ENCODE measurements at regions of chr19 and their contacts with region 1.

Region 1: DNA sequence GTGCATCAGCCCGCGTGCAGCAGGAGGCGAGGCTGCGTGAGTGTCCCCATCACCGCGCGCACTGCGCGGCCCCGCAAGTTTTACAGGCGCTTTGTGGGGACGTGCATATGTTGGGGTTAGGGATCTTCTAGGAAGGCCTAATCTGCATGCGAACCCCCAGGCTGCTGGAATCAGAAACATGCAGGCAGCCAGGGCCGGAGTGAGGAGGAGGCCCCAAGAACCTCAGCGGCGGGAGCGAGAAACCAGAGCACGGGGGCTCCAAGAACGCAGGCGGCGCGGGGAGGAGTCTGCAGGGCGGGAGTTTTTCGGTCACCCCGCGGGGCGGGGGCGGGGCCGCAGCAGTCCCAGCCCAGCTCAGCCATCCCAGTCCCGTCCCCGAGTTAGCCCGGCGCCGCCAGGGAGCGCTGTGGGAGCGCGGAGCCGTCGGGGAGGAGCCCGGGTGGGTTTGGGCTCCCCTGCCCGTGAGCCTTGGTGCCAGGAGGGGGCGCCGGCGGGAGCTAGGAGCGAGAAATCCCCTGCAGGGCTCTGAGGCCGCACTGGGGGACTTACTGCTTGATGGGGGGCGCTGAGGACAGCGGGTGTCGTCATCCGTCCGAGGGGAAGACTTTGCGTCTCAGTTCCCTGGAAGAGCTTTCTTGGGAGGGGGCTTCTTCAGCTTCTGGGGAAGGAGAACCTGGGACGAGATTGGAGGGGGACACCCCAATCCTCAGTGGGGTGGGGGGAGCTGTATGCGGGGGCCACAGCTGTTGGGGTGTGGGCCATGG is 933 bp upstream of the NRTN start:
- DNase-seq: peak; percentile 98
- ATAC-seq: peak; percentile 91
- H3K4me3 ChIP-seq: peak overlapping the region; percentile 58
- H3K27ac ChIP-seq: no peak overlapping the region
- H3K4me1 ChIP-seq: peaks cover 12% of the 10 kb centered on the region
- H3K27me3 ChIP-seq: no peaks in the 10 kb centered on the region
- CTCF ChIP-seq: peak; percentile 100

Region 2: DNA sequence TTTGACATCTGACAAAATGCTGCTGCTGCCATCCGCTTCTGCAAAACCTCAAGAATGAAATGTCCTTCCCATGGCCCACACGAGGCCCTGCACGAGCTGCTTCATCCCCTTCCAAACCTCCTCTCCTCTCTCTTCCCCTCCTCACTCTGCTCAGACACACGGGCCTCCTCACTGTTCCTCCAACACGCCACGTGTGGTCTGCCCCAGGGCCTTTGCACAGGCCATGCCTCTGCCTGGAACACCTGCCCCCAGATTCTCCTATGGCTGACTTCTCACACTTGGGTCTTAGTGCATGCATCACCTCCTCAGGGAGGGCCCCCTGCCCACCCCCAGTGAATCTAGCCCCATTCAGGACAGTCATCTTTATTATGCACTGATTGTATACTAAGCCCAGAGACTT is 16.9 kb after region 1 on chr19:
- CTCF ChIA-PET with region 1: interaction called, 17 read pairs
- POLR2A ChIA-PET with region 1: interaction called, 3 read pairs
- intact Hi-C with region 1: no loop called
- DNase-seq: no peak
- ATAC-seq: no peak
- H3K4me3 ChIP-seq: no peak overlapping the region
- H3K27ac ChIP-seq: no peak overlapping the region
- H3K4me1 ChIP-seq: no peaks in the 10 kb centered on the region
- H3K27me3 ChIP-seq: no peaks in the 10 kb centered on the region
- CTCF ChIP-seq: no peak

Region 3: GRCh38 chr19:5827891-5828660 is 24.1 kb after region 1 on chr19:
- CTCF ChIA-PET with region 1: interaction called, 16 read pairs
- POLR2A ChIA-PET with region 1: interaction called, 3 read pairs
- intact Hi-C with region 1: no loop called
- DNase-seq: peak; percentile 88
- ATAC-seq: peak; percentile 64
- H3K4me3 ChIP-seq: peak overlapping the region; percentile 59
- H3K27ac ChIP-seq: peak overlapping the region; percentile 35; the same call in 1 of the 2 replicates
- H3K4me1 ChIP-seq: peaks cover 14% of the 10 kb centered on the region; the same call in 1 of the 2 replicates
- H3K27me3 ChIP-seq: no peaks in the 10 kb centered on the region
- CTCF ChIP-seq: no peak

Region 4: DNA sequence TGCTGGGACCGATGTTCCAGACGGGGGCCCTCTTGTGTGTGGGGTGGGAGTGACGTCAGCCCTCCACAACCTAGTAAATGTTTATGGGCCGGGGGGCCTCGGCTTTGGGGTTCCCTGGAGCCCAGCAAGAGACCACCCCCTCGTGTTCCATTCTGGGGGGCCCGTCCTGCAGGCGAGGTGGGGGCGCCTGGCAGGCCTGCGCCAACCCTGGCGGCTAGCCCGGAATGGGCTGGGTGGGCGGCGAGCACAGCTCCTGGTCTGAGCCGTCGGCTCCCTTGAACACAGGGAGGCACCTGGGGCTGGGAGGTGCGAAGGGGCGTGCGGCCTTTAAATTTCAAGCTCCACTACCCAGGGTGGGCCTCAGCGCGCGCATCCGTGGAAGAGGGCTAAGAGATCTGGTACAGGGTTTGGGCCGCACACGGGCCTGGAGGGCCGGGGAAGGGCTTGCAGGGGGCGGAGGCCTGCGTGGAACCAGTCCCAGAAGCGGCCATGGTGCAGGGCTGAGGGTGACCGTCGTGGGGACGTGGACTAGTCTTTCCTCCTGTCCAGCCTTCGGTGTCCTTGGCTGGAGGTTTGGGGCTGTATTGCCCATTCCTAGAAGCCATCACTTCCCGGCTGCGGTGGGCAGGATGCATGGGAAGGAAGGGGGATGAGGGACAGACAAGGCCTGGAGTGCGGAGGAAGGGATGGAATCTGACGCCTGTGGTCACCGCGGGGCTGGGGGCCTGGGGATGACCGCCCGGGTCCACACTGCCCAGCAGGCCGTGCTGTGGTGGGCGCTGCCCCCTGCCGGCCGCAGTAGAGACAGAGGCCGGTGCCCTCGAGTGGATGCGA is 88.2 kb after region 1 on chr19:
- CTCF ChIA-PET with region 1: interaction called, 23 read pairs
- POLR2A ChIA-PET with region 1: no interaction called
- intact Hi-C with region 1: loop called (anchors 2 kb)
- DNase-seq: peak; percentile 60
- ATAC-seq: peak; percentile 76
- H3K4me3 ChIP-seq: no peak overlapping the region
- H3K27ac ChIP-seq: no peak overlapping the region
- H3K4me1 ChIP-seq: no peaks in the 10 kb centered on the region
- H3K27me3 ChIP-seq: 0 out of 2 replicates have a peak, but pooled peaks cover 4% of the 10 kb centered on the region
- CTCF ChIP-seq: peak; percentile 96

Region 5: DNA sequence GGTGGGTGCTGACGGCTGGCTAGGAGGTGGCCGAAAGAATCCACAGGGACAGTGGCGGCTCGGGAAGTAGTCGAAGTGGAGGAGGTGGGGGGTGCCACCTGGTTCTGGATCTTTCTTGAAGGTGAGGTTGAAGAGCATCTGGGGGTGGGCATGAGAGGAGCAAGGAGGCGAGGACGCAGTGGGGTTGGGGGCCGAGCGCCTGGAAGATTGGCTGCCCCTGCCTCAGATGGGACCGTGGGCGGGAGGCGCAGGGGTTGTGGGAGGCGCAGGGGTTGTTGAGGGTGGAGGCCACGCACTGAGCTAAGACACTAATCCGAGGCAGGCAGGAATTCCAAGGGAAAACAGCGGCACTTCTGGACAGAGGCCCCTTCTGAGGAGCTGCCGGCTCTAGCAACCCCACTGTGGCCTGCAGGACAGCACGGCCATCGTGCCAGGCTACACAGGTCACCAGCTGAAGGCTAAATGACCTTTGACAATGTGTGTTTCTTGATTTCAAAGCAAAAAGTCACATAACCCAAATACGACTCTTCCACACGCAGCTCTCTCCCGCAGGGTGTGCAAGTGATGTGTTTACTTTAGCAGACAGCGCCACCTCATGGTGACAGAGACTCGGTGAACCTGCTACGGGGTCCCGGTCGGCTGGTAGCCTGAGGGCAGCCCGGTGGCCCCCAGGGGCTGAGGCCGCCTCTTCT is 218.1 kb after region 1 on chr19:
- CTCF ChIA-PET with region 1: interaction called, 12 read pairs
- POLR2A ChIA-PET with region 1: no interaction called
- intact Hi-C with region 1: loop called (anchors 5 kb)
- DNase-seq: peak; percentile 85
- ATAC-seq: peak; percentile 92
- H3K4me3 ChIP-seq: no peak overlapping the region
- H3K27ac ChIP-seq: no peak overlapping the region
- H3K4me1 ChIP-seq: peaks cover 35% of the 10 kb centered on the region
- H3K27me3 ChIP-seq: no peaks in the 10 kb centered on the region
- CTCF ChIP-seq: peak; percentile 93

Region 6: GRCh38 chr19:6113616-6114188 is 309.8 kb after region 1 on chr19:
- CTCF ChIA-PET with region 1: no interaction called
- POLR2A ChIA-PET with region 1: no interaction called
- intact Hi-C with region 1: no loop called
- DNase-seq: no peak
- ATAC-seq: no peak
- H3K4me3 ChIP-seq: no peak overlapping the region
- H3K27ac ChIP-seq: no peak overlapping the region
- H3K4me1 ChIP-seq: peaks cover 9% of the 10 kb centered on the region
- H3K27me3 ChIP-seq: no peaks in the 10 kb centered on the region
- CTCF ChIP-seq: no peak

Measured in PC-3 (cell line).